Activated CD4-positive, alpha-beta T cell treated with anti-CD3 and anti-CD28 coated beads for 36 hours (primary cell): ENCODE measurements at regions of chr4 and their contacts with region 1.

Region 1: DNA sequence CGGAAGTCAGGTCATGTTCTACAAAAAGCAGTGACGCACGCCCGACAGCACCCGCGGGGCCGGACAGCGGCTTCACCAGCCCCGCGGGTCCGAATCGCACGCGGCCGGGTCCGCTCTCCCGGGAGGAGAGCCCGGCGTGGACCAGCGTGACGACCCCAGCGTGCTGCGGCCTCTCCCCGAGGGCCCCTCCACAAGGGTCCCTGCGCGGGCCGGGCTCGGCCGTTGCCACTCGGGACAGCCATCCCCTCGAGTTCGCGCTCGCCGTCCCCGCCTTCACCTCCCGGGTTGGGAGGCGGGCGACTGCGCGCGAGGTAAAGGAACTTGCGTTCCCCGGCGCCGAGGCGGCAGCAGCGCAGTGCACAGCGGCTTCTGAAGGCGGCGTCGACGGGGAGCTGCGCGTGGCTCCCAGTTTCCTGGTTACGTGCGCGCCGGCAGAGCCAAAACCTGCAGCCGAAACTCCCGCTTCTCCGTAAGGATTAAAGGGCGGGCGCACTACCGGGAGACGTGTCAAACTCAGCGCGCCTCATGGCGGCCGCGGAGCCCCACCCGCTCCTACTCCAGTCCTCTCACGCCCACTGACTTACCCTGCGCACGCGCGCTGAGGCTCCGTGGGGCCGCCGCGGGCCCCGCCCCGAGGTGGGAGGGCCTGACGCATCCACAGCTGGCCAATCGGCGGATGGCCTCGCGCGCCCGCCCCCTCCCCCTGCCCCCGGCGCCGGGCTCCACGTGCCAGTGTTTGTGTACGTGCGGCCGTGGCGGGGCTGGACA is 416 bp upstream of the LRP2BP start:
- DNase-seq: peak; percentile 98
- ATAC-seq: peak; percentile 85
- H3K4me3 Mint-ChIP-seq: peak overlapping the region; percentile 94
- H3K27ac Mint-ChIP-seq: peak overlapping the region; percentile 97
- H3K4me1 Mint-ChIP-seq: peaks cover 37% of the 10 kb centered on the region
- H3K27me3 Mint-ChIP-seq: no peaks in the 10 kb centered on the region

Region 2: GRCh38 chr4:183504064-183504929 is 1891.8 kb before region 1 on chr4:
- CTCF ChIA-PET with region 1: no interaction called
- POLR2A ChIA-PET with region 1: no interaction called
- intact Hi-C with region 1: loop called (anchors 10 kb)
- DNase-seq: peak; percentile 99
- ATAC-seq: peak; percentile 80
- H3K4me3 Mint-ChIP-seq: peak overlapping the region; percentile 85
- H3K27ac Mint-ChIP-seq: peak overlapping the region; percentile 95
- H3K4me1 Mint-ChIP-seq: peaks cover 33% of the 10 kb centered on the region
- H3K27me3 Mint-ChIP-seq: no peaks in the 10 kb centered on the region

Region 3: GRCh38 chr4:184649026-184649970 is 746.8 kb before region 1 on chr4 and contains the starts of genes CASP3 and PRIMPOL:
- CTCF ChIA-PET with region 1: no interaction called
- POLR2A ChIA-PET with region 1: no interaction called
- intact Hi-C with region 1: loop called in 1 of 2 experiments (anchors 1 kb)
- DNase-seq: peak; percentile 98
- ATAC-seq: peak; percentile 88
- H3K4me3 Mint-ChIP-seq: peak within 1 kb of the TSS; percentile 94
- H3K27ac Mint-ChIP-seq: peak within 1 kb of the TSS; percentile 95
- H3K4me1 Mint-ChIP-seq: peaks cover 51% of the 10 kb centered on the region
- H3K27me3 Mint-ChIP-seq: no peaks in the 10 kb centered on the region
- total RNA-seq, gene CASP3: 44.3 to 65.7 TPM
- total RNA-seq, gene PRIMPOL: 20.4 to 24.3 TPM

Region 4: GRCh38 chr4:185071236-185071811 is 324.8 kb before region 1 on chr4:
- CTCF ChIA-PET with region 1: no interaction called
- POLR2A ChIA-PET with region 1: no interaction called
- intact Hi-C with region 1: no loop called
- DNase-seq: no peak
- ATAC-seq: no peak
- H3K4me3 Mint-ChIP-seq: no peak overlapping the region
- H3K27ac Mint-ChIP-seq: no peak overlapping the region
- H3K4me1 Mint-ChIP-seq: no peaks in the 10 kb centered on the region
- H3K27me3 Mint-ChIP-seq: peaks cover 18% of the 10 kb centered on the region

Region 5: GRCh38 chr4:185203486-185204237 is 192.5 kb before region 1 on chr4 and contains the start of gene CFAP97:
- CTCF ChIA-PET with region 1: no interaction called
- POLR2A ChIA-PET with region 1: no interaction called
- intact Hi-C with region 1: loop called (anchors 1 kb)
- DNase-seq: peak; percentile 82
- ATAC-seq: peak; percentile 85
- H3K4me3 Mint-ChIP-seq: peak within 1 kb of the TSS; percentile 94
- H3K27ac Mint-ChIP-seq: peak within 1 kb of the TSS; percentile 97
- H3K4me1 Mint-ChIP-seq: peaks cover 41% of the 10 kb centered on the region
- H3K27me3 Mint-ChIP-seq: no peaks in the 10 kb centered on the region
- total RNA-seq, gene CFAP97: 54.6 to 81.8 TPM

Region 6: GRCh38 chr4:185369731-185370130 is 26.4 kb before region 1 on chr4:
- CTCF ChIA-PET with region 1: no interaction called
- POLR2A ChIA-PET with region 1: no interaction called
- intact Hi-C with region 1: no loop called
- DNase-seq: no peak
- ATAC-seq: no peak
- H3K4me3 Mint-ChIP-seq: no peak overlapping the region
- H3K27ac Mint-ChIP-seq: no peak overlapping the region
- H3K4me1 Mint-ChIP-seq: no peaks in the 10 kb centered on the region
- H3K27me3 Mint-ChIP-seq: no peaks in the 10 kb centered on the region

Region 7: GRCh38 chr4:185425647-185426352 is 29.7 kb after region 1 on chr4 and contains the start of gene UFSP2:
- CTCF ChIA-PET with region 1: interaction called, 8 read pairs
- POLR2A ChIA-PET with region 1: interaction called, 11 read pairs
- intact Hi-C with region 1: loop called (anchors 1 kb)
- DNase-seq: peak; percentile 93
- ATAC-seq: peak; percentile 91
- H3K4me3 Mint-ChIP-seq: peak within 1 kb of the TSS; percentile 83
- H3K27ac Mint-ChIP-seq: peak within 1 kb of the TSS; percentile 90
- H3K4me1 Mint-ChIP-seq: peaks cover 30% of the 10 kb centered on the region
- H3K27me3 Mint-ChIP-seq: peaks cover 2% of the 10 kb centered on the region
- total RNA-seq, gene UFSP2: 27.3 to 40.3 TPM

Region 8: DNA sequence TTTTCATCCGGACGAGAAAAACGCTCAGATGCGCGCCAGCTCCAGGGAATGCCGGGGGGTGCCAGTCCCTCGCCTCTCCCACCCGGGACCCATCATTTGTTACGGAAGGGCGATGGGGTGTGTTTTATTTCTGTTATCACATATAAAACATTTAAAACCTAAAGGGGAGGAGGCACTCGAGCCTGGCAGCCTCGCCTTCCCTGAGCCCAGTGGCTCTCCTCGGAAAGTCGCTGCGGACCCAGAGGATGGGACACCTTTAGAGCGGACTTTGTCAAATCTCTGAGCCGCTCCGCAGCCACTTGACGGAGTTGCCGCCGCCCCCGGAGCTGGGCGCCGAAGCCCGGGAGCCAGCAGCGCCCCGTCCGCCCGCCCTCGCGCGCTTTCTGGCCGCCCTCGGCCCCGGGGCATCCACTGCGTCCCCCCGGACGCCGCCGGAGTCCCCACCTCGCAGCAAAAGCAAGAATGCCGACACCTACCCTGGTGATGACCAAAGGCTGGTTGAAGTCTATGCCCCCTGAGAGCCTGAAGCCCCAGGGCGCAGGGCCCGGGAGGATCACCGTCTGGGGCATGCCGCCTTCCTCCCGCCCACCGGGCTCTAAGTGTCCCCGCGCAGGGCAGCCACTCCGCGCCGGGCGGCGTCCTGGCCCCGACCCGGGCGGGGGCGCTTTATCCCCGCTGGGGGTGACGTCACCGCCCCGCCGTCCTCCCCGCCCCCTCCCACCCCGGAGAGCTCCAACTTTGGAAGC is 138.9 kb after region 1 on chr4 and contains the start of gene PDLIM3:
- CTCF ChIA-PET with region 1: no interaction called
- POLR2A ChIA-PET with region 1: no interaction called
- intact Hi-C with region 1: no loop called
- DNase-seq: peak; percentile 34
- ATAC-seq: peak; percentile 70
- H3K4me3 Mint-ChIP-seq: peak within 1 kb of the TSS; percentile 42
- H3K27ac Mint-ChIP-seq: no peak within 1 kb of the TSS
- H3K4me1 Mint-ChIP-seq: peaks cover 3% of the 10 kb centered on the region
- H3K27me3 Mint-ChIP-seq: peaks cover 30% of the 10 kb centered on the region
- total RNA-seq, gene PDLIM3: not detected

Region 9: DNA sequence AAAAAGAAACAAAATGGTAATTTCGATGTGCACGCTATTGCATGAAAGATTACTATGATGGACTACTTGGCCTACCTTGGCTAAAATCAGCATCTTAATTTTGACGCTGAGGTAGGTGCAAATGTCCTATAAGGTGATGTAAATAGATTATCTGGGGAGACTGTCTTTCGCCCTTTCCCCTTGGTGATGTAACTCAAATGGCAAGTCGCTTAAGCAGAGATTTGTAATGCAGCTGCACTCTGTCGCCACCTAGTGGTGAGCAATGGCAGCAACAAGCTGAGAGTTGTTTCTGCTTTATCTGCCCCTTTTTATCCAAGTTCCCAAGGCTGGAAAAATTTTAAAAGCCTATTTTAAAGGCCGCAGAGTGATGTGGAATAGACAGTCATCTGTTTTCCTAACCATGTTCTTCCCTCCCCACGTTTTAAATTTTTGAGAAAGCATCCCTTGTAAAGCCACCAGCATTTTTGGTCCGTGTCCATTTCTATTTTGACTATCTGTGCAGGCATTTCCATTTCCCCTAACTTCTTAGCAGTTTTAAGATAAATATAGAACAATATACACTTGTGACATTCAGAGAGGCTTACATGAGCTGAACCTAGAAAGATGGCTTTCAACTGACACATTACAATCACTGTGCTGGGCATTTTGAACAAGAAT is 201.5 kb after region 1 on chr4:
- CTCF ChIA-PET with region 1: interaction called, 4 read pairs
- POLR2A ChIA-PET with region 1: interaction called, 3 read pairs
- intact Hi-C with region 1: loop called (anchors 1 to 5 kb)
- DNase-seq: peak; percentile 86
- ATAC-seq: peak; percentile 57
- H3K4me3 Mint-ChIP-seq: no peak overlapping the region
- H3K27ac Mint-ChIP-seq: no peak overlapping the region
- H3K4me1 Mint-ChIP-seq: peaks cover 3% of the 10 kb centered on the region
- H3K27me3 Mint-ChIP-seq: peaks cover 18% of the 10 kb centered on the region